WTC11 (cell line): ENCODE measurements at regions of chr20 and their contacts with region 1.

Region 1: GRCh38 chr20:17938871-17939619 is 29.5 kb downstream of the SNX5 start:
- DNase-seq: peak; percentile 82
- ATAC-seq: peak; percentile 71
- H3K4me3 Mint-ChIP-seq: no peak overlapping the region
- H3K27ac Mint-ChIP-seq: peak overlapping the region; percentile 98
- H3K4me1 Mint-ChIP-seq: peaks cover 70% of the 10 kb centered on the region
- H3K27me3 Mint-ChIP-seq: no peaks in the 10 kb centered on the region; the same call in 1 of the 2 replicates
- CTCF ChIP-seq: peak; percentile 88

Region 2: GRCh38 chr20:17504898-17505635 is 434.0 kb before region 1 on chr20:
- CTCF ChIA-PET with region 1: interaction called, 15 read pairs
- POLR2A ChIA-PET with region 1: interaction called, 3 read pairs
- DNase-seq: peak; percentile 58
- ATAC-seq: peak; percentile 83
- H3K4me3 Mint-ChIP-seq: peak overlapping the region; percentile 72
- H3K27ac Mint-ChIP-seq: no peak overlapping the region; the same call in 1 of the 2 replicates
- H3K4me1 Mint-ChIP-seq: peaks cover 16% of the 10 kb centered on the region
- H3K27me3 Mint-ChIP-seq: peaks cover 10% of the 10 kb centered on the region
- CTCF ChIP-seq: peak; percentile 29; the same call in 1 of the 2 replicates

Region 3: GRCh38 chr20:17617551-17618223 is 321.4 kb before region 1 on chr20:
- CTCF ChIA-PET with region 1: interaction called, 14 read pairs
- POLR2A ChIA-PET with region 1: no interaction called
- DNase-seq: peak; percentile 82
- ATAC-seq: peak; percentile 84
- H3K4me3 Mint-ChIP-seq: no peak overlapping the region
- H3K27ac Mint-ChIP-seq: peak overlapping the region; percentile 15; the same call in 1 of the 2 replicates
- H3K4me1 Mint-ChIP-seq: no peaks in the 10 kb centered on the region
- H3K27me3 Mint-ChIP-seq: no peaks in the 10 kb centered on the region
- CTCF ChIP-seq: peak; percentile 62

Region 4: DNA sequence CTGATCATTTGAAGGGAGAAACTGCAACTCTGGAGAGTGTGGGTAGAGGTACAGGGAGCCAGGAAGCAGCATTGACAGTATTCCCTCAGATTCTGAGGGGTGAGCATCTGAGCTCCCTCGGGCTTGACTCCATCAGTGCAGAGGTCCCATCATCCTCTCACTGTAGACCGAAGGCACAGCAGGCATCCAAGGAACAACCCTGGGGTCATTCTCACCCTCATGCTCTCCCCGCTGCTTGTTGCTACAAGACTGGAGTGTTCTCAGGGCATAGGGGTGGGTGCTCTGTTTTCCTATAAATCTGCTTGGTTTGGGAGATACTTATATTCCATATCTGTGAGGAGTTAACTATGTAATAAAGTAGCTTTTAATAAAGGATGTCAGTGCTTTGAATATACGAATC is 222.0 kb before region 1 on chr20:
- CTCF ChIA-PET with region 1: no interaction called
- POLR2A ChIA-PET with region 1: no interaction called
- DNase-seq: no peak
- ATAC-seq: no peak
- H3K4me3 Mint-ChIP-seq: no peak overlapping the region
- H3K27ac Mint-ChIP-seq: no peak overlapping the region
- H3K4me1 Mint-ChIP-seq: no peaks in the 10 kb centered on the region; the same call in 1 of the 2 replicates
- H3K27me3 Mint-ChIP-seq: no peaks in the 10 kb centered on the region
- CTCF ChIP-seq: no peak

Region 5: DNA sequence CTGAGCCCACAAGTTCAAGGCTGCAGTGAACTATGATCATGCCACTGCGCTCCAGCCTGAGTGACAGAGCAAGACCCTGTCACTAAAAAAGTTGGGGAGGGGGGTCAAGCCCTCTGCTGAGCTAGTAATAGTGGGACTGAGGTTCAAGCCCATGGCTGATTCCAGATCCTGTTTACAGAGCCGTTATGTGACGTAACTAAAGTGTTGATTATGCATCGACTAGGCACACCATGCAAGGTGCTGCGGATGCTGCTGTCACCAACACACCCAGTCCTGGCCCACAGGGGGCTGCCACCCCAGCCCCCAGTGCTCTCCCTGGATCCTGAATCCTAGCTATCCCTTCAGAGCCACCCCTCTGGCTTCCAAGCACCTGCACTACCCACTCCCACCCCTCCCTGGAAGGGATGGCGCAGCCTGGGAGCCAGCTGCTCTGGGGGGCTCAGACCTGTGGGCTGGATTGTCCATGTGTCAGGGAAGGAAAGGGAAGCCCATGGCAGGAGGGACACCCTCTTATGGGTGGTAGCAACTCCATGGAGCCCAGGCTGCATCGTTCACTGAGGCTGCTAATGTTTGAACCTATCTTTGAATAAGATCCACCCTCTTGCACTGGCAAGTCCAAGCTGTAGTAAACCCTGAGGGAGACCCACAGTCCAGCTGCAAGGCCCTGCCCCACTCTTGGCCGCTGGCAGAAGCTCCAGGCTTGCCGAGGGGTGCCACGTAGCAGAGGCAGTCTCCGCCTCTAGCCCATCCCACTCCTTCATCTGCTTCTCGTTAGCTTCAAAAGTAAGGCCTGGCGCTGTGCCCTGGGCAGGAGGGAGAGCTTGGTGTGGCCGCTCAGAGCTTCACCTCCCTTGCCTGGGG is 65.4 kb before region 1 on chr20:
- CTCF ChIA-PET with region 1: interaction called, 12 read pairs
- POLR2A ChIA-PET with region 1: interaction called, 4 read pairs
- DNase-seq: no peak
- ATAC-seq: peak; percentile 52
- H3K4me3 Mint-ChIP-seq: no peak overlapping the region; the same call in 1 of the 2 replicates
- H3K27ac Mint-ChIP-seq: no peak overlapping the region; the same call in 1 of the 2 replicates
- H3K4me1 Mint-ChIP-seq: peaks cover 78% of the 10 kb centered on the region
- H3K27me3 Mint-ChIP-seq: no peaks in the 10 kb centered on the region; the same call in 1 of the 2 replicates
- CTCF ChIP-seq: no peak

Region 6: GRCh38 chr20:17898548-17898994 is 40.5 kb before region 1 on chr20:
- CTCF ChIA-PET with region 1: interaction called, 27 read pairs
- POLR2A ChIA-PET with region 1: interaction called, 3 read pairs
- DNase-seq: peak; percentile 72
- ATAC-seq: peak; percentile 29; the same call in 1 of the 2 replicates
- H3K4me3 Mint-ChIP-seq: no peak overlapping the region
- H3K27ac Mint-ChIP-seq: no peak overlapping the region
- H3K4me1 Mint-ChIP-seq: peaks cover 37% of the 10 kb centered on the region
- H3K27me3 Mint-ChIP-seq: no peaks in the 10 kb centered on the region; the same call in 1 of the 2 replicates
- CTCF ChIP-seq: peak; percentile 92

Region 7: DNA sequence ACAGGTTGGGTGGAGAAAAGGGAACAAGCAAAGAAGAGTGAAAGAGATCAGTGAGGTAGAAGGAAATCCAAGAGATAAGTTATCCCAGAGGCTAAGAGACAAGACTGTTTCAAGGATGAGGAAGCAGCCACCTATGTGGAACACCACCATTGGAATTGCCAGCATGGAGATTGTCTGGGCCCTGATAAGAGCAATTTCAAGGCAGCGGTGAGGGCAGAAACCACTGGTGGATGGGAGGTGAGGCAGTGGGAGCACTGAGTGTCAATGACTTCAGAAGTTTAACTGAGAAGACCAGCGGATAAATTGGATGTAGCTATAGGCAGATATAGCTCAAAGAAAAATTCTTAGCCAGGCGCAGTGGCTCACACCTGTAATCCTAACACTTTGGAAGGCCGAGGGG is 27.1 kb before region 1 on chr20:
- CTCF ChIA-PET with region 1: no interaction called
- POLR2A ChIA-PET with region 1: no interaction called
- DNase-seq: no peak
- ATAC-seq: no peak
- H3K4me3 Mint-ChIP-seq: no peak overlapping the region
- H3K27ac Mint-ChIP-seq: no peak overlapping the region
- H3K4me1 Mint-ChIP-seq: peaks cover 2% of the 10 kb centered on the region; the same call in 1 of the 2 replicates
- H3K27me3 Mint-ChIP-seq: no peaks in the 10 kb centered on the region
- CTCF ChIP-seq: no peak

Region 8: DNA sequence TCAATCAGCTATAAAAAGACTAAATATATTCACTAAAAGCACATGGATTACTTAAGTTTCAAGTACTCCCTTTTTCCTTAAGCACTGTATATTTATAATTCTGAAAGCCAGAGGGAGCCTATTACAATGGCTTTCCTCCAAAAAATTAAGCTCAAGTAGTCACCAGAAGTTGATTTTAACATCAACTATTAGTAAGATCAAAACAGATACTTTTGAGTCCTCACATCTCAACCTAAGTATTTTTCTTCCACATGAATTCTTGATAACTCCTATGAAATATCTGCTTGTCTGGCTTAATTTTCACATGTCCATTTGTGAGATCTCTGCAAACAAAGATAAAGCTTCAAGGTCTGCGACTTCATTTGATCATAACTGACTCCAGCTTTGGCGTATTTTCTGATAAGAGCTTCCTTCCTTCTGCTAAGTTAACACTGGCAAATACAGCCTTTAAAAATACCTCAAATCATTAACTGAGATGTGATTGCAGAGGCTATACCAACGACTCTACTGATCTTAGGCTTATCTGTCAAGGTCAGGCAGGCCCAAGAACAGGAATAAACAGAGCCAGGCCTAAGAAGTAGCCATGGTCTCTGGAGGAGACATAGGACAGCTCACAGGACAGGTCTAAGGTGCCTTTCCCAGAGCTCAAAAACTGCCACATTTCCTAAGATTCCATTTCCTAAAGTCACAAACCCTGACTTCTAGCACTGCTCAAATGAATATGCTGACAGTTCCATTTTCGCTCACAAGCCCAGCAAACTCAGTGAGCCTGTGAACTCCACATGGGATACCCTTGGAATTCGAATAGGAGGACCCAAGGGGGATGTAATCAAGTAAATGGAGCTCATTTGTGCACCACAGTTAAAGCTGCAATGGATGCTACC is 19.6 kb after region 1 on chr20:
- CTCF ChIA-PET with region 1: interaction called, 10 read pairs
- POLR2A ChIA-PET with region 1: no interaction called
- DNase-seq: no peak
- ATAC-seq: peak; percentile 5; the same call in 1 of the 2 replicates
- H3K4me3 Mint-ChIP-seq: no peak overlapping the region
- H3K27ac Mint-ChIP-seq: peak overlapping the region; percentile 86
- H3K4me1 Mint-ChIP-seq: peaks cover 65% of the 10 kb centered on the region
- H3K27me3 Mint-ChIP-seq: no peaks in the 10 kb centered on the region
- CTCF ChIP-seq: no peak